Activated naive CD8-positive, alpha-beta T cell treated with anti-CD3 and anti-CD28 coated beads, Interleukin-2, amount 10 ng/mL, durations not matched to agents 7 days and 5 days (primary cell): ENCODE measurements at regions of chr3 and their contacts with region 1.

Region 1: GRCh38 chr3:32428092-32429068 is 36.7 kb downstream of the CMTM7 start:
- DNase-seq: peak; percentile 56
- ATAC-seq: peak; percentile 62
- H3K4me3 Mint-ChIP-seq: peak overlapping the region; percentile 74
- H3K27ac Mint-ChIP-seq: peak overlapping the region; percentile 92
- H3K4me1 Mint-ChIP-seq: peaks cover 85% of the 10 kb centered on the region
- H3K27me3 Mint-ChIP-seq: no peaks in the 10 kb centered on the region

Region 2: DNA sequence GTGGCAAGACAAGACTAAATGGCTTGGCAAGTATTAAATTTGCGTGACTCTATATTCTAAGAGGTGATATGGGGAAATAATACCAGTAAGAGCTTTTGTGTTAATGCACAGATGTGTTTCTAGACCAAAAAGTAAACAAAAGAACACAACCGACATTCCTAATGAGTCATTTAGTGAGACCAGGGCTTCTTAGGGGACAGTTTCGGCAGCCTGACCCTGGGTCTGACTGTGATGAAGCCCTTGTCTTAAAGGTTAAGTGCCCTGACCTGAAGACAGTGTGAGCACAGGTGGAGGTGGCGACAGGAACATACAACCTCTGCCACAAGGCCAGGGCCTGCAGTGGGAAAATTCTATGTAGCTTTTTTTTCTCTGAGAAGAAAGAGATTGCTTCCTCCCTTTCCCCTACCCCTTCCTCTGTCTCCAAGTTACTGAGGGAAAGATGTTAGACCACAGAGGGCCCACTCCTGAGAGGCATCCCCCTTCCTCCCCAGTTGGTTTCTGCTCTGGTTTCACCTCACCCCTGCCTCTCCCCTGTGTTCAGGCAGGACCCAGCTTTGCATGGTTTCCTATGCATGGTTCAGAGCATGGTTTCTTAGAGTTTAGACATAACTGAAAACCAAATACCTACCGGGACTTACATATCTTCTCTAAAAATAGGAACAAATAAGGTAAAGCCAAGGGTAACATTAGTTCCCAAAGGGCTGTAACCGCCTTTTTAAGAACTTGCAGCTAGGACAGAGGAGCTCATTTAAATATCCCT is 61.6 kb before region 1 on chr3:
- POLR2A ChIA-PET with region 1: no interaction called
- DNase-seq: no peak
- ATAC-seq: no peak
- H3K4me3 Mint-ChIP-seq: no peak overlapping the region
- H3K27ac Mint-ChIP-seq: no peak overlapping the region
- H3K4me1 Mint-ChIP-seq: peaks cover 12% of the 10 kb centered on the region
- H3K27me3 Mint-ChIP-seq: peaks cover 2% of the 10 kb centered on the region

Region 3: GRCh38 chr3:32391643-32392535 is 36.5 kb before region 1 on chr3 and contains the start of gene CMTM7:
- POLR2A ChIA-PET with region 1: interaction called, 15 read pairs
- DNase-seq: peak; percentile 76
- ATAC-seq: peak; percentile 76
- H3K4me3 Mint-ChIP-seq: peak within 1 kb of the TSS; percentile 99
- H3K27ac Mint-ChIP-seq: peak within 1 kb of the TSS; percentile 97
- H3K4me1 Mint-ChIP-seq: peaks cover 43% of the 10 kb centered on the region
- H3K27me3 Mint-ChIP-seq: no peaks in the 10 kb centered on the region
- total RNA-seq, gene CMTM7: 45.3 to 49.0 TPM

Region 4: GRCh38 chr3:32414520-32415202 is 13.7 kb before region 1 on chr3:
- POLR2A ChIA-PET with region 1: interaction called, 45 read pairs
- DNase-seq: no peak
- ATAC-seq: peak; percentile 95
- H3K4me3 Mint-ChIP-seq: peak overlapping the region; percentile 41
- H3K27ac Mint-ChIP-seq: peak overlapping the region; percentile 77
- H3K4me1 Mint-ChIP-seq: peaks cover 48% of the 10 kb centered on the region
- H3K27me3 Mint-ChIP-seq: no peaks in the 10 kb centered on the region

Region 5: GRCh38 chr3:32438596-32439344 is 10.4 kb after region 1 on chr3:
- POLR2A ChIA-PET with region 1: interaction called, 49 read pairs
- DNase-seq: no peak
- ATAC-seq: peak; percentile 31
- H3K4me3 Mint-ChIP-seq: peak overlapping the region; percentile 54
- H3K27ac Mint-ChIP-seq: peak overlapping the region; percentile 91
- H3K4me1 Mint-ChIP-seq: peaks cover 51% of the 10 kb centered on the region
- H3K27me3 Mint-ChIP-seq: no peaks in the 10 kb centered on the region

Region 6: DNA sequence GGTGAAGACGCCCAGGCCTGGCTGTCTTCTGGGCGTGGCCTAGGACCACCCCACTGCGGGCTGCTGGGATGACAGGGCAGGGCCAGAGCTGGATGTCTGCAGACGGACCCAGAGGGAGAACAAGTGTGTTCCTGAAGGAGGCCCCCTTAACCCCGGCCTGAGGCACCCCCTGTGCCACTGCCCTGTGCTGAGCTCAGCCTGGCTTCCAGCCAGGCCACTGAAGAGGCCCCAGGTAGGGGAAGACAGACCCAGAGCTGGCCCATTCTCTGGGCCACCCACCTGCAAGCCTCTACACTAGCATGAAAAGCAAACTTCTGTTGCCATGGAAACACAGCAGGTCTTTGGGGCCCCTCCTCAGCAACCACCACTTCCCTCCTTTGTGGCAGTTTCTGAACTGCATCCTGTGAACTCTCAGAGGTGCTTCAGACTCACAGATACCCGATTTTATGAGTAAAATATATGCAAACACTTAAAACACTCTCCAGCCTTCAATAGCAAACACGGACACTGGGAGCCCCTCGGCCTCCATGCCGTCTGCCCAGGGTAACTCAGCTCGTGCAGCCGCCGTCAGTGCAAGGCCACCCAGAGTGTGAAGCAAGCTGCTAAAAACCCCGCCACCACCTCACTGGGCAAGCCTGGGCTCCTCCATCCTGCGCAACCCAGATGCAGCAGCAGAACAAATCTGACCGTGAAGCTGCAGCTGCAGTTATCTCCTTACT is 31.8 kb after region 1 on chr3:
- POLR2A ChIA-PET with region 1: interaction called, 112 read pairs
- DNase-seq: peak; percentile 77
- ATAC-seq: peak; percentile 81
- H3K4me3 Mint-ChIP-seq: peak overlapping the region; percentile 86
- H3K27ac Mint-ChIP-seq: no peak overlapping the region
- H3K4me1 Mint-ChIP-seq: peaks cover 39% of the 10 kb centered on the region
- H3K27me3 Mint-ChIP-seq: no peaks in the 10 kb centered on the region

Region 7: GRCh38 chr3:32584660-32585059 is 156.3 kb after region 1 on chr3:
- POLR2A ChIA-PET with region 1: no interaction called
- DNase-seq: no peak
- ATAC-seq: no peak
- H3K4me3 Mint-ChIP-seq: no peak overlapping the region
- H3K27ac Mint-ChIP-seq: no peak overlapping the region
- H3K4me1 Mint-ChIP-seq: no peaks in the 10 kb centered on the region
- H3K27me3 Mint-ChIP-seq: peaks cover 17% of the 10 kb centered on the region